ENCODE measurements at regions of chr16 and their contacts with region 1.

Region 1: DNA sequence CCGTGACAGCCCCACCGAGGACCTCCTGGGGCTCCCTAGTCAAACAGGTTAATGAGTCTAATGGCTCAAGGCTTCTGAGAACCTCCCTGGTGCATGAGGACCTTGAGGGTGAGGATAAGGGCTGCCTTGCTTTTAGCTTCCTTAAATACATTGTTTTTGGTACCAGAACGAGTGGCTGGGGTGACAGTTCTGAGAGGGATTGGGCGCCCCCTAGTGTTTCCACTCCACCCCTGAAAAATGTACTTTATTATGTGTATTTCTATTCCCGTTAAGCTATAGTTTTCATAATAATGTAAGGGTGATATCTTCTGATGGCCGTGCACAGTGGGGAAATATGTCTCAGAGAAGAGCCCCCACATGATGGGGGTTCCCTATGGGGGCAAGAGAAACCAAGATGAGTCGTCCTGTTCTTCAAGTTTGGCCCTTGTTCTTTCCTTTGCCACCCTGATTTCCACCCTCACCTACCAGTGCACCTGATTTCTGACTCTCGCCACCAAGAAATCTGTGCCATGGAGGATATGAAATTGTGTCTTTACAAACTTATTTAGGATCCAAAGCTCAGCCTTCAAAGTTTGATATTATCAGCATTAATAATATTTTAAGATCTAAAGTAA is 14.5 kb upstream of the VWA3A start:
- DNase-seq: peak; percentile 85
- H3K4me3 Mint-ChIP-seq: no peak overlapping the region
- H3K27ac Mint-ChIP-seq: no peak overlapping the region
- H3K4me1 Mint-ChIP-seq: no peaks in the 10 kb centered on the region
- H3K27me3 Mint-ChIP-seq: no peaks in the 10 kb centered on the region
- CTCF ChIP-seq: peak; percentile 89

Region 2: GRCh38 chr16:21646721-21647561 is 430.9 kb before region 1 on chr16:
- CTCF ChIA-PET with region 1: no interaction called
- intact Hi-C with region 1: no loop called
- DNase-seq: no peak
- H3K4me3 Mint-ChIP-seq: no peak overlapping the region
- H3K27ac Mint-ChIP-seq: no peak overlapping the region
- H3K4me1 Mint-ChIP-seq: no peaks in the 10 kb centered on the region
- H3K27me3 Mint-ChIP-seq: no peaks in the 10 kb centered on the region
- CTCF ChIP-seq: no peak

Region 3: GRCh38 chr16:22001591-22001990 is 76.2 kb before region 1 on chr16:
- CTCF ChIA-PET with region 1: interaction called, 74 read pairs
- intact Hi-C with region 1: loop called (anchors 1 kb)
- DNase-seq: no peak
- H3K4me3 Mint-ChIP-seq: no peak overlapping the region
- H3K27ac Mint-ChIP-seq: no peak overlapping the region
- H3K4me1 Mint-ChIP-seq: peaks cover 18% of the 10 kb centered on the region
- H3K27me3 Mint-ChIP-seq: no peaks in the 10 kb centered on the region
- CTCF ChIP-seq: no peak

Region 4: GRCh38 chr16:22007509-22008214 is 70.1 kb before region 1 on chr16 and contains the start of gene MOSMO:
- CTCF ChIA-PET with region 1: interaction called, 74 read pairs
- intact Hi-C with region 1: no loop called
- DNase-seq: peak; percentile 78
- H3K4me3 Mint-ChIP-seq: peak within 1 kb of the TSS; percentile 80
- H3K27ac Mint-ChIP-seq: peak within 1 kb of the TSS; percentile 66
- H3K4me1 Mint-ChIP-seq: peaks cover 37% of the 10 kb centered on the region
- H3K27me3 Mint-ChIP-seq: no peaks in the 10 kb centered on the region
- CTCF ChIP-seq: no peak
- total RNA-seq, gene MOSMO: 24.0 and 30.1 TPM in 2 replicates

Region 5: DNA sequence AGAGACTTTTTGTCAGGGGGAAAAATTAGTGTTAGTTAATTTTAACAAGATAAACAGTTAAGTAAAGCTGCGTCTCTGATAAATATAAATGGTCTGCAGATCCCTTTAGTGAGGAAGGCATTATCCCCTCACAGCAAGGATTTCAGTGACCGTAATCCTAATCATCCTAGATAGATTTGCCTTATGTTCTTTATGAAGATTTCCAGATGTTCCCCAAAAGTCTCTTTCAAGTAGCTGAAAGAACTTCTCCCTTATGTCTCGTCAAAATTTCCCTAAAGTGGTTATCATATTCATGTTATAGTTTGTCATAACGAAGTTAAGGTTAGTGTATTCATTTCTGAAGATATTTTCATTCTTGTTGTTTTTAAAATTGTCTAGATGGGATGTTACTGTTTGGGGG is 64.3 kb before region 1 on chr16:
- CTCF ChIA-PET with region 1: interaction called, 26 read pairs
- intact Hi-C with region 1: no loop called
- DNase-seq: no peak
- H3K4me3 Mint-ChIP-seq: no peak overlapping the region
- H3K27ac Mint-ChIP-seq: no peak overlapping the region
- H3K4me1 Mint-ChIP-seq: peaks cover 55% of the 10 kb centered on the region
- H3K27me3 Mint-ChIP-seq: no peaks in the 10 kb centered on the region
- CTCF ChIP-seq: no peak

Region 6: DNA sequence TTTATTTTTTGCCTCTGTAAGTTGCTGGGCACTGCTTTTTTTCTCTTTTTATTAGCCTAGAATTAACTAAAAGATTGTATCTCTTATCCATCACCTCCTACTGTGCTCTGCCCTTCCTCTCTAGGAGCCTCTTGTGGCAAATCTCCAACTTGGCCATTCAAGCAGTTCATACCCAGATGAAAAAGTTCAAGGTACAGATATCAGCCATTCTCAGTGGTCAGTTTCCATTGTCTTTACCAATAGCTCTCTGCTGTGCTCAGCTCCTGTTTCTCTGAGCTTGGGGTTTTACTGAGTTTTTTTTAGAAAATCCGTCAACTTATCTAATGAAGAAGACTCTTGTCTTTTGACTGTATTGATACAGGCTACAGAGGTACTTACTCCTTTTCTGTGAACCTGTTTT is 54.3 kb before region 1 on chr16:
- CTCF ChIA-PET with region 1: interaction called, 19 read pairs
- intact Hi-C with region 1: no loop called
- DNase-seq: no peak
- H3K4me3 Mint-ChIP-seq: no peak overlapping the region
- H3K27ac Mint-ChIP-seq: no peak overlapping the region
- H3K4me1 Mint-ChIP-seq: peaks cover 75% of the 10 kb centered on the region
- H3K27me3 Mint-ChIP-seq: no peaks in the 10 kb centered on the region
- CTCF ChIP-seq: no peak

Region 7: DNA sequence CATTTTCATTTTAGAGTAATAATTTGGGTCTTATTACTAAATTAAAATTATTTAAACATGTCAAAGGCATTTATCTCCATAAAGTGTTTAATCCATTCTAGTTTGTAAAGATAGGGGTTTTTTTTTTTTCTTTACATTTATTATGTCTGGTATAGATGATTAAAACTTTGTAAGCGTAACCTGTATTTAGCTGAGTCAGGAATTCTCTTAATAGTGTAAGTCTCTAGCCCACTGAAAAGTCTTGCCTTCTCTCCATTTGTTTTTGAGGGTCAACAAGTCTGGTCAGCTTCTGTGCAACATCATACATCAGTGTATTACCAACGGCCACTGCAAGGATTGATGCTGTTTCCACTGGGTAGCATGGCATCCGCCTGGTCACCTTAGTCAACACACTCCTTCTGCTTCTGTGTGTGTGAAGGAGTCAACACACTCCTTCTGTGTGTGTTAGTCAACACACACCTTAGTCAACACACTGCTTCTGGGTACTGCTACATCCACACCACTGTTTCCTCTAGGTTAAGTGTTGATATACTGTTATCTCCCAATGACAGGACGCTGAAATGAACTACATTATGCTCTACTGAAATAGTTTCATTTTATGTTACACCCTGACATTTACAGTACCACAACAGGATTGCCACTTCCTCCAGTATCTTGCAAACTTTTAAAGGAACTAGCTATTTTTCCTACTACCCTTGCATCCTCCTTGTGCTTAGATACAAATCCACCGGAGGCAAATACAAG is 22.8 kb before region 1 on chr16:
- CTCF ChIA-PET with region 1: no interaction called
- intact Hi-C with region 1: no loop called
- DNase-seq: no peak
- H3K4me3 Mint-ChIP-seq: no peak overlapping the region
- H3K27ac Mint-ChIP-seq: no peak overlapping the region
- H3K4me1 Mint-ChIP-seq: no peaks in the 10 kb centered on the region
- H3K27me3 Mint-ChIP-seq: no peaks in the 10 kb centered on the region
- CTCF ChIP-seq: no peak

Region 8: GRCh38 chr16:22098405-22099255 is 20.8 kb after region 1 on chr16:
- CTCF ChIA-PET with region 1: interaction called, 17 read pairs
- intact Hi-C with region 1: no loop called
- DNase-seq: peak; percentile 39
- H3K4me3 Mint-ChIP-seq: peak overlapping the region; percentile 30
- H3K27ac Mint-ChIP-seq: no peak overlapping the region
- H3K4me1 Mint-ChIP-seq: no peaks in the 10 kb centered on the region
- H3K27me3 Mint-ChIP-seq: peaks cover 37% of the 10 kb centered on the region
- CTCF ChIP-seq: peak; percentile 61

Region 9: DNA sequence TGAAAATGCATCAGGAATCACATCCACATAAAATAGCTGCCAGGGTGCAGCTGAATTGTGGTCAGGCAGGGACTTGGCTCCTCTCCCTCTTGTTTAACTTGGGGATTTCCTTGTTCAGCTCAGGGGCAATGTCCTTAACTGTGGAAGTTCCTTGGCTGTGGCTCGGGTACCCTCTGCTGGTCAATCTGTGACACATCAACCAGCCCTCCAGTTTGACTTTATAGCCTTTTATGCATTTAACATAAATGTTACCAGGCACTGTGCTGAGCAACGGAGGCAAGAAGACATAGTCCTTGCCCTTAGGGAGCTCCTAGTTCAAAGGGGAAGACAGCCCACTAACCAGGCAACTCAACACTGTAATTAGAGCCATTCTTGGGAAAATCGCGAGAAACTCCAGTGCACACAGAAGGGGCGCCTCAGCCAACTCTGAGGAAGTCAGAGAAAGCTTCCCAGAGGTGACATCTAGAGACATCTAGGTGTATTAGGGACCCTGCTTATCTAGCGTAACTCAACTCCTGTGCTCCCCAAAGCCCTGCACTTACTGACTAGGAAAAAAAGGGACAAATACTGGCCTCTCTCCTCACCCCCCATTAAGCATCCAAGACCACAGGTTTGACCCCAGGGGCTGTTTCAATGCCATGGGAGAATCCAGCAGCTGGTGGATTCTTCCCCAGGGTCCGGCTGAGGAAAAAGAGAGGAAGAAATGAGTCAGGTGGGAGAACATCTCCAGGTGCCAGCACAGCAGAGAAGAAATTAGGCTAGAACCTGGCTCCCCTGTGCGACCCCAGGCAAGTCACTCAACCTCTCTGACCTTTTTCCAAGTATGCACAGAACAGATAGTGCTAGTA is 111.0 kb after region 1 on chr16:
- CTCF ChIA-PET with region 1: interaction called, 37 read pairs
- intact Hi-C with region 1: loop called (anchors 1 kb)
- DNase-seq: peak; percentile 86
- H3K4me3 Mint-ChIP-seq: no peak overlapping the region
- H3K27ac Mint-ChIP-seq: no peak overlapping the region
- H3K4me1 Mint-ChIP-seq: peaks cover 39% of the 10 kb centered on the region
- H3K27me3 Mint-ChIP-seq: no peaks in the 10 kb centered on the region
- CTCF ChIP-seq: peak; percentile 78